A549 (cell line): ENCODE measurements at regions of chr3 and their contacts with region 1.

Region 1: DNA sequence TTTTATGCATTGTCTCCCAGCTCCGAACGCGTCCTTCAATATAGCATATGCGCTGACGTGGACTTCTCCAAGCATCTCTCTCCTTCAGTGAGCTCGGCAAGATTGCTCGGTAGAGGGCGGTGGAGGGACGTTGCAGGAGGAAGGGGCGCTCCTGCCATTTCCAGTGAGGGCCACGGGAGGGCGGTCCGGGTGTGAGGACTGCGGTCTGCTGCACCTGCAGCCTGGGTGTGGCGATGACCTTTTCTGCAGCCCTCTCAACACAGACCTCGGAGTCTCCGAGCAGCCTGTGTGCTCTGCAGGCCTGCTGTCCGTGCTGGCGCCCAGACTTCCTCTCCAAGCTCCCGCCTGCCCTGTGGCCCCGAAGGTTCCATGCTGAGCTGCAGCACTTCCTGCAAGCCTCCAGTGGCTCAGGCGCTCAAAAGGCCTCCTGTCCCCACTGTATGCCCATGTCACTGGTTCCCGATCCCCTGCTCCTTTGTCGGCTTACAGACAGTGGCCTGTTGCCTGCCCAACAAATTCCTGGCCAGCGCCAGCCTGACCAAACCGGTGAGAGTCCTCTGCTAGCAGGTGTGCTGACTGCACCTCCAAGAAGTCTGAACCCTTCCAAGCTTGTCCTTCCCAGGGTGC is 8.9 kb upstream of the RTP3 start:
- DNase-seq: peak; percentile 84 to 86
- ATAC-seq: peak; percentile 97 to 99
- H3K4me3 ChIP-seq: no peak overlapping the region
- H3K27ac ChIP-seq: no peak overlapping the region
- H3K4me1 ChIP-seq: no peaks in the 10 kb centered on the region
- CTCF ChIP-seq: peak; percentile 90
- EP300 ChIP-seq: no peak
- POLR2A ChIP-seq: no peak
- RAD21 ChIP-seq: peak; percentile 91 to 94

Region 2: DNA sequence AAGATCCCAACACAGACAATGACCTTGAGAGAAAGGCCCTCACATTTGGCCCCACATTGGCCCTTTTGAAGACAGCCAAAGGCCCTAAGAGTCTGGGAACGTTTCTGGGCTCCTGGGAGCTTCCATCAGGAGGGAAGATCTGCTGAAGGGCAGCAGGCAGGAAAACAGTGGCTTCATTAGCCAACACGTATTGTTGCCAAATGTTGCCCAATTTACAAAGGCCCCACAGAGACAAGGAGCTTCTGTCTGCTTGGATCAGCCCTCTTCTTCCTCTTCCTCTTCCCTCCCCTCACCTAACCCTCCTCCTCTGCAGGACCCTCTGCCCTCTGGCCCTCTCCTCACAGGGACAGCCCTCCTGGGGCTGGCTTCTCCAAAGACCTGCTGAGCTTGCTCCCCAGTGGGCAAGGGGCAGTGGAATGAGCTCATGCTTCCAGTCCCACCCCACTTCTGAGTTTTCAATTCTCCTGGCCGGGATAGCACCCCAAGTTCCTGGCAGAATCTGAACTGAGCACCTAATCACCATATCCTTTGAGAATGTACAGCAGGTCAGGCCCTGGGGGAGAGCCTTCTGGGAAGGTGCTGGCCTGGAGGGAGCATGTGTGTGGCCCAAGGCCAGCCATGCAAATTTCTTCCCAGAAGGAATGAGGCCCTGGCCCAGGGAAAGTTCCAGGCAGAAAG is 19.0 kb before region 1 on chr3:
- CTCF ChIA-PET with region 1: interaction called, 13 read pairs
- POLR2A ChIA-PET with region 1: no interaction called
- DNase-seq: no peak
- ATAC-seq: no peak
- H3K4me3 ChIP-seq: no peak overlapping the region
- H3K27ac ChIP-seq: no peak overlapping the region
- H3K4me1 ChIP-seq: no peaks in the 10 kb centered on the region
- CTCF ChIP-seq: no peak
- EP300 ChIP-seq: no peak
- POLR2A ChIP-seq: no peak
- RAD21 ChIP-seq: no peak

Region 3: GRCh38 chr3:46517016-46517793 is 28.4 kb after region 1 on chr3:
- CTCF ChIA-PET with region 1: interaction called, 11 read pairs
- POLR2A ChIA-PET with region 1: no interaction called
- DNase-seq: peak in 1 of 2 experiments; percentile 34
- ATAC-seq: peak in 1 of 2 experiments; percentile 47; a peak in 2 of 6 replicates
- H3K4me3 ChIP-seq: no peak overlapping the region
- H3K27ac ChIP-seq: no peak overlapping the region
- H3K4me1 ChIP-seq: 0 out of 3 replicates have a peak, but pooled peaks cover 3% of the 10 kb centered on the region
- CTCF ChIP-seq: no peak
- EP300 ChIP-seq: no peak
- POLR2A ChIP-seq: no peak
- RAD21 ChIP-seq: no peak

Region 4: DNA sequence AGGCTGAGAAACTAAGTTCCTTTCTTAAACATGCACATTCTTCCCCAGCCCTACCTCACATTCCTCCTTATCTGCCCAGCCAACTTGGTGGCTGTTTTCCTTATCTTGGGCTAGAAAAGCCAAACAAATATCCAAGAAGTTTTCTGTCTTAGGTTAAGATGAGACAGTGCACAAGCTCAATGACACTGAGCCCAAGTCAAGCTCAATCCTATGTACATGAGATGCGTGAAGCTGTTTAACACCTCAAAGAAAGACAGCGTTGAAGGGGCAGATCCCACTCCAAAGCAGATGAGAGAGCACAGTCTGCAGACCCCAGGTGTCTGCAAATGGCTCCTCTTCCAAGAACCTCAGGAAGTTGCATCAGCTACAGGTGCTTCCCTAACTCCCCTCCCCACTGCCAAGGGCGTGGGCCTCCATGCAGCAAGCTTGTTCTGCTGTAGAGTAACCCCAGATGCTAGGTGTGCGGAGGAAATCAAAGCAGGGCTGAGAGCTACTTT is 60.6 kb after region 1 on chr3:
- CTCF ChIA-PET with region 1: interaction called, 12 read pairs
- POLR2A ChIA-PET with region 1: no interaction called
- DNase-seq: no peak
- ATAC-seq: no peak
- H3K4me3 ChIP-seq: no peak overlapping the region
- H3K27ac ChIP-seq: no peak overlapping the region
- H3K4me1 ChIP-seq: no peaks in the 10 kb centered on the region
- CTCF ChIP-seq: no peak
- EP300 ChIP-seq: no peak
- POLR2A ChIP-seq: no peak
- RAD21 ChIP-seq: no peak

Region 5: GRCh38 chr3:46566036-46566641 is 77.3 kb after region 1 on chr3 and contains the start of gene LRRC2:
- CTCF ChIA-PET with region 1: interaction called, 24 read pairs
- POLR2A ChIA-PET with region 1: no interaction called
- DNase-seq: no peak
- ATAC-seq: peak; percentile 56 to 78
- H3K4me3 ChIP-seq: peak within 1 kb of the TSS; percentile 40
- H3K27ac ChIP-seq: 0 out of 6 replicates have a peak within 1 kb of the TSS, but pooled peaks of 1 of the 2 experiments have one; percentile 21
- H3K4me1 ChIP-seq: no peaks in the 10 kb centered on the region
- CTCF ChIP-seq: no peak
- EP300 ChIP-seq: no peak
- POLR2A ChIP-seq: no peak
- RAD21 ChIP-seq: no peak
- polyA plus RNA-seq, gene LRRC2: 0.03 TPM in 1 of 2 replicates, not detected in the other